Activated CD4-positive, alpha-beta memory T cell treated with anti-CD3 and anti-CD28 coated beads for 36 hours (primary cell): ENCODE measurements at regions of chr1 and their contacts with region 1.

Region 1: DNA sequence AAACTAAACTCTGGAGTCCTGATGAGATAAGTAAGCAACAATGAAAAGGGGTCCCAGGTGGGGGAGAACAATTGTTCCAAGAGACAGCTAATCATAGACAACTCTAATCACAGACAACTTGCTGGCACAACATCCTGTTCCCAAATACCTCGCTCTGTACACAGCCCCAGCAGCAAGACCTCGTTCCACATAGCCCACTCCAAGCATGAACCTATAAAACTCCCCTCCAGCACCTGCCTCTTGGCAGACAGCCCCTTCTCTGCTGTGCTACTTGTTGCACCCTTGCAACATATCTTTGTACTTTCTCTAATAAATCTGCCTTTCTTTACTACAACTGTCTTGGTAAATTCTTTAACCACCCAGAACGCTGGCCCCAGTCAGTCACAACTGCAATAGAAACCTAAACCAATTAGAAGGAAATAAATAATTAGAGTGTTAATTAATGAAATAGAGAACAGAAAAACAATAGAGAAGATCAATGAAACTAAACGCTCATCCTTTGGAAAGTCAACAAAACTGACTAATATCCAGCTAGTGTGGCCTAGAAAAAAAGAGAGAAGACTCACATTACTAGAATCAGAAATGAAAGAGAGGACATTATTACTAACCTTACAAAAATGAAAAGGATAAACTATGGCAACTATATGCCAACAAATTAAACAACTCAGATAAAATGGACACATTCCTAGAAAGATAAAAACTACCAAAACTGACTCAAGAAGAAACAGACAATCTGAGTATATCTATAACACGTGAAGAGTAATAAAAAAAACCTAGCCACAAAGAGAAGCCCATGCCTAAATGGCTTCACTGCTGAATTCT is 36.1 kb downstream of the LRRC40 start:
- DNase-seq: no peak
- H3K4me3 Mint-ChIP-seq: no peak overlapping the region
- H3K27ac Mint-ChIP-seq: no peak overlapping the region
- H3K4me1 Mint-ChIP-seq: peaks cover 11% of the 10 kb centered on the region
- H3K27me3 Mint-ChIP-seq: no peaks in the 10 kb centered on the region

Region 2: DNA sequence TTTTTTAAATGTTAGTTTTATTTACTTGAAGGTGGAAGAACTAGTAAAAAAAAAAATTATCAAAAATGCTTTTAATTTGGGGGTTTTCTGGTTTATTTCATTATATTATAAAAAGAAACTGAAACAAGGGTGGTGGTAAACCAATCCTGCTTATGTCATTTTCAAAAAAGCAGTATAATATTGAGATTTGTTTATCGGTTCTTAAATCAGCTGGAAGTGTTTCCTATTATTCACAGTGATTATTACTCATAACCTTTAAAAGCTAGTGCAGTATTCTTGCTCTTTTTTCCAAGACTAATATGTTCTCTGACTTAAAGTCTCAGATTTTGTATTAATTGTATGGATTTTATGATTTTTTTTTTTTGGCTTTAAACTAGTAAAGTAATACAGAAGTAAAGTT is 41.6 kb after region 1 on chr1:
- CTCF ChIA-PET with region 1: interaction called, 3 read pairs
- POLR2A ChIA-PET with region 1: no interaction called
- intact Hi-C with region 1: loop called (anchors 1 kb)
- DNase-seq: no peak
- H3K4me3 Mint-ChIP-seq: no peak overlapping the region
- H3K27ac Mint-ChIP-seq: no peak overlapping the region
- H3K4me1 Mint-ChIP-seq: peaks cover 46% of the 10 kb centered on the region
- H3K27me3 Mint-ChIP-seq: no peaks in the 10 kb centered on the region

Region 3: DNA sequence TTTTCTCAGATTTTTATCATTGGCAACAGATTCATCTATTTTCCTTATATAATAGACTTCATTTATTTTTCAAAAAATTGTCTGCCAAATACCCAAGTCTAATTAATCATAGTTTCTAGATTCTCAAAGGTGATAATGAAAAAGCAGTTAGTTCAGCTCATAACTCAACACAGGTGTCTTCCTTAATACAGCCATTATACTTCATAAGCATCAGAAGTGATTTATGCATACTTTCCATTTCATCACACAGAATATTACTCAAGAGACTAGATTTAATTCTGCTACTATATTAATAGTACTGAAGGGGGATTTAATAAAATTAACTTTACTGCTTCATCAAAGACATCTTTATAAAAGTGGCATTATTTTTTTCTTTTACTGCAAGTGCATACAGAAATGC is 70.7 kb after region 1 on chr1:
- CTCF ChIA-PET with region 1: no interaction called
- POLR2A ChIA-PET with region 1: no interaction called
- intact Hi-C with region 1: no loop called
- DNase-seq: no peak
- H3K4me3 Mint-ChIP-seq: no peak overlapping the region
- H3K27ac Mint-ChIP-seq: no peak overlapping the region
- H3K4me1 Mint-ChIP-seq: no peaks in the 10 kb centered on the region
- H3K27me3 Mint-ChIP-seq: no peaks in the 10 kb centered on the region